ENCODE measurements at regions of chr1 and their contacts with region 1.

Region 1: GRCh38 chr1:107963601-107964335 is 1.2 kb downstream of the VAV3 start:
- DNase-seq: peak; percentile 64
- H3K4me3 Mint-ChIP-seq: peak overlapping the region; percentile 86
- H3K27ac Mint-ChIP-seq: peak overlapping the region; percentile 92
- H3K4me1 Mint-ChIP-seq: peaks cover 27% of the 10 kb centered on the region
- H3K27me3 Mint-ChIP-seq: peaks cover 10% of the 10 kb centered on the region

Region 2: DNA sequence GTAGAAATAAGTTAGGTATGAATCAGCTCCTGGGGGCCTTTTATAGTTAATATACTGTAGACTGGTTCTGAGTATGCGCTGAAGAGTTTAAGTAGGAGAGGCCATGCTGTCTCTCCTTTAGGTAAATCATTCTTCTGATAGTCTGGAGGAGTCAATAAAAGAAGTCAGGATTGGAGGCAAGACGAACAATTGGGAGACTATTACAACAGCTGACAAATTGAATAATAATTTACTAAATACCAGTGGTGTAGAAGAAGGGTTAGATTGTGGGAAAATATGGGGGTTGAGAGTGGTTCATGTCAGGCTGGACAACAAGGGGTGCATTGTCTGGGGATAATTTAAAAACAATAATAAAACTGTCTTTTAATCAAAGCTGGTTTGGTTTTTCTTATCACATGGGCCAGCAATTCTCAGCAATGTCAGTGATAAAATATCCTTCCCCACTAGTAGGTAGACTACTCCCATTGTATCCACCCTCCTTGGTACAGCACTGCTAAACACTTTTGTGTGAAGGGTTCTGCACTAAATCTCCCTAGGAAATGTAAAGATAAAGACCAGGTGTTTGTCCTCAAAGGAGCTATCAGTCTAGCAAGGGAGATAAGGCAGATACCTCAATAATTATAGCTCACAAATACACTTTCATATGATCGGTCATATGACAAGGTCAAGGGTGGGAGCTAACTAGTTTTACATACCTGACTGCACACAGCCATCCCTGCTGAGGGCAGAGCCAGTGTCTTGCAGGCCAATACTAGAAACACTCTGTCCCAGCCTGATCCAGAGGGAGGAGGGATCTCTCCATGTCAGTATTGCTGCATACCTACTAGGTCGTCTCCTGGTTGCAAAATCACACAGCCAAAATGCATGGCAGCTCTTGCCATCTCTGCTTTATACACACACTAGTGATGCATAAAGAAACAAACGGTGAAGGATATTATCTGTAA is 298.5 kb before region 1 on chr1:
- CTCF ChIA-PET with region 1: no interaction called
- POLR2A ChIA-PET with region 1: no interaction called
- intact Hi-C with region 1: no loop called
- DNase-seq: no peak
- H3K4me3 Mint-ChIP-seq: no peak overlapping the region
- H3K27ac Mint-ChIP-seq: no peak overlapping the region
- H3K4me1 Mint-ChIP-seq: no peaks in the 10 kb centered on the region
- H3K27me3 Mint-ChIP-seq: no peaks in the 10 kb centered on the region

Region 3: GRCh38 chr1:107782217-107782845 is 181.4 kb before region 1 on chr1:
- CTCF ChIA-PET with region 1: interaction called, 20 read pairs
- POLR2A ChIA-PET with region 1: no interaction called
- intact Hi-C with region 1: loop called (anchors 1 kb)
- DNase-seq: no peak
- H3K4me3 Mint-ChIP-seq: no peak overlapping the region
- H3K27ac Mint-ChIP-seq: no peak overlapping the region
- H3K4me1 Mint-ChIP-seq: peaks cover 24% of the 10 kb centered on the region
- H3K27me3 Mint-ChIP-seq: no peaks in the 10 kb centered on the region

Region 4: DNA sequence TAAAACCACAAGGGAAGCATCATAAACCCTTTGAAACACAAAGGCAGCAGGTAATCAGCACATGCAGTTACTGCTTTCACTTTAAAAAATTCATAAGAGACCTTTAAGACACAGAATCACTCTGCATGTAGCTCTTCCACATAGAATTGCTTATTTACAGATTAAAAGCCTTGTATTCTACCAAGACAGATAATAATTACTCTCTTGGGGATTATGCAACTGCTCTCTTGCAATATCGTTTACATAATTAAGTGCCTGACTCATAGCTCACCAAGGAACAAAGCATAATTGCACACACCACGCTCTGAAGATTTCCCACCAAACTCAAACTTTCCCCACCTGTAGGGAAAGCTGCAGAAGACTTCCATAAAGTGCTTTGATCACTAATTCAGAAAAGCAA is 86.7 kb before region 1 on chr1:
- CTCF ChIA-PET with region 1: no interaction called
- POLR2A ChIA-PET with region 1: interaction called, 3 read pairs
- intact Hi-C with region 1: loop called (anchors 5 kb)
- DNase-seq: no peak
- H3K4me3 Mint-ChIP-seq: no peak overlapping the region
- H3K27ac Mint-ChIP-seq: no peak overlapping the region
- H3K4me1 Mint-ChIP-seq: peaks cover 8% of the 10 kb centered on the region
- H3K27me3 Mint-ChIP-seq: no peaks in the 10 kb centered on the region

Region 5: DNA sequence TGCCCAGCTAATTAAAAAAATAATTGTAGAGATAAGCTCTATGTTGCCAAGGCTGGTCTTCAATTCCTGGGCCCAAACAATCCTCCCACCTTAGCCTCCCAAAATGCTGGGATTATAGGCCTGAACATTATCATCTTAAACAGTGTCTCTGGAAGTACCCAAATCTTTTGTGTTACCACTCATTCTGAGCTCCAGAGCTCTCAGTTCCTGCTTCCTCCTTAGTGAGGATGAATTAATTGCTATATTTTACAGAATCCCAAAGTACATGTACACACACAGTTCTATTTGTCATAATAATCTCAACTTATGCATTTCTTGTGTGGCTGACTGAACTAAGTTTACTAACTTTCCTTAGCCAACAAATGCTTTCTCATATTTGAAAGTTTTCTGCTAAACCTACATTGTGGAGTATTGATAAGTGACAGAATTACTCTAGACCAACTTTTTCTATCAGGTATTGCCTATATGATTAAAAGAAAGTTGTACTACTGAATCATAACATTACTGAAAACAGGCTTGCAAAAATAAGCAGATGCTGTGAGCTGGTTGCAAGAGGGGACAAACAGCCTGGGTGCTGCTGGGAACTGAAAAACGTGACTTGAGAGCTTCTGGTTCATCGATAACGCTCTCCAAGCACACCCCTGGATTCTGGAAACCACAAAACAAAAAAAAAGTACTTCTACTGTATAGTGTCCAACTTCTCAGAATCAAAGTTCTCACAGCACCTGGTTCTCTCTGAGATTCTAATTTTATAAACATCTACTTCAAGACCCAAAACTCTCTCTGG is 14.1 kb before region 1 on chr1:
- CTCF ChIA-PET with region 1: interaction called, 3 read pairs
- POLR2A ChIA-PET with region 1: interaction called, 8 read pairs
- intact Hi-C with region 1: loop called (anchors 1 kb)
- DNase-seq: peak; percentile 39
- H3K4me3 Mint-ChIP-seq: no peak overlapping the region
- H3K27ac Mint-ChIP-seq: no peak overlapping the region
- H3K4me1 Mint-ChIP-seq: peaks cover 24% of the 10 kb centered on the region
- H3K27me3 Mint-ChIP-seq: peaks cover 1% of the 10 kb centered on the region

Region 6: GRCh38 chr1:108049178-108049819 is 85.5 kb after region 1 on chr1:
- CTCF ChIA-PET with region 1: no interaction called
- POLR2A ChIA-PET with region 1: no interaction called
- intact Hi-C with region 1: loop called (anchors 2 kb)
- DNase-seq: peak; percentile 43
- H3K4me3 Mint-ChIP-seq: no peak overlapping the region
- H3K27ac Mint-ChIP-seq: no peak overlapping the region
- H3K4me1 Mint-ChIP-seq: peaks cover 24% of the 10 kb centered on the region
- H3K27me3 Mint-ChIP-seq: peaks cover 6% of the 10 kb centered on the region

Region 7: GRCh38 chr1:108125312-108126138 is 161.8 kb after region 1 on chr1:
- CTCF ChIA-PET with region 1: interaction called, 20 read pairs
- POLR2A ChIA-PET with region 1: no interaction called
- intact Hi-C with region 1: loop called (anchors 5 kb)
- DNase-seq: peak; percentile 71
- H3K4me3 Mint-ChIP-seq: no peak overlapping the region
- H3K27ac Mint-ChIP-seq: no peak overlapping the region
- H3K4me1 Mint-ChIP-seq: peaks cover 4% of the 10 kb centered on the region
- H3K27me3 Mint-ChIP-seq: no peaks in the 10 kb centered on the region